ENCODE measurements at regions of chr17 and their contacts with region 1.

Region 1: DNA sequence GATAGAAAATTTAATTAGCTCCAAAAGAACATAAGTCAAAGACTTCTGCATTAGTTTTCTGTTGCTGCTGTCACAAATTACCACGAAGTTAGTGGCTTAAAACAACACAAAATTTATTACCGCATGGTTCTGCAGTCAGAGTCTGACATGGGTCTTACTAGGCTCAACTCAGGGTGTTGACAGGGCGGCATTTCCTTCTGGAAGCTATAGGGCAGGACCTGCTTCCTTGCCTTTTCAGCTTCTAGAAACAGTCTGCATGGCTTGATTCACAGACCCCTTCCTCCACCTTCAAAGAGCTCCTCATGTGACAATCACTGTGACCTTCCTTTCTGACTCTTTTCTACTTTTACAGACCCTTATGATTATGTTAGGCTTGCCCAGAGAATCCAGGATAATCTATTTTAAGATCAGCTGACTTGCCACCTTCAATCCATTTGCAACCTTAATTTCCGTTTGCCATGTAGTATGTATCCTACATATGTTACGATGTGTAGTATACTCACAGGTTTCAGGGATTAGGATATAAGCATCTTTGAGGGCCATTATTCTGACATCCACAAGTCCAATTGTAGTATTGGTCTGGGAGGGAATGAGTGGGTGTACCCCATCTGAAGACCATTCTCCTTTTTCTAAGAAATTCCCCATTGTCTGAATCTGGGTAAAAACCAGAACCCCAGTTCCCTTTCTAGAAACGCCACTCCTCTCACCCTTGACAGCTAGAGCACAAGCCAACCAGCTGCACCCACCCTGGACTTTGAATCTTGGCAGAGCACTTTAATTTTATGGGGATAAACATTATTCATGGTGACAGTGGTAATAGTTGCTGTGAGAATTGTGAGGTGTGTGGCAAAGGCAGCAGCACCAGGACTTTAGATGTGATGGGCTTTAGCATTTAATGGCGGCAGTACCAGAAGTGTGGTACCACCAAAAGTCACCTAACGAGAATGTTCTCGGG is 265.5 kb downstream of the KCNJ2 start:
- DNase-seq: no peak
- ATAC-seq: no peak
- H3K4me3 ChIP-seq: no peak overlapping the region
- H3K27ac ChIP-seq: no peak overlapping the region
- H3K4me1 ChIP-seq: no peaks in the 10 kb centered on the region
- H3K27me3 ChIP-seq: no peaks in the 10 kb centered on the region

Region 2: GRCh38 chr17:70353408-70354092 is 81.3 kb before region 1 on chr17:
- intact Hi-C with region 1: no loop called
- DNase-seq: no peak
- ATAC-seq: no peak
- H3K4me3 ChIP-seq: no peak overlapping the region
- H3K27ac ChIP-seq: no peak overlapping the region
- H3K4me1 ChIP-seq: no peaks in the 10 kb centered on the region
- H3K27me3 ChIP-seq: no peaks in the 10 kb centered on the region

Region 3: GRCh38 chr17:70378076-70378475 is 56.7 kb before region 1 on chr17:
- intact Hi-C with region 1: loop called in 1 of 2 experiments (anchors 2 kb)
- DNase-seq: no peak
- ATAC-seq: no peak
- H3K4me3 ChIP-seq: no peak overlapping the region
- H3K27ac ChIP-seq: no peak overlapping the region
- H3K4me1 ChIP-seq: no peaks in the 10 kb centered on the region
- H3K27me3 ChIP-seq: no peaks in the 10 kb centered on the region

Measured in aorta (tissue), 5 donors.